A549 (cell line): ENCODE measurements at regions of chr17 and their contacts with region 1.

Region 1: DNA sequence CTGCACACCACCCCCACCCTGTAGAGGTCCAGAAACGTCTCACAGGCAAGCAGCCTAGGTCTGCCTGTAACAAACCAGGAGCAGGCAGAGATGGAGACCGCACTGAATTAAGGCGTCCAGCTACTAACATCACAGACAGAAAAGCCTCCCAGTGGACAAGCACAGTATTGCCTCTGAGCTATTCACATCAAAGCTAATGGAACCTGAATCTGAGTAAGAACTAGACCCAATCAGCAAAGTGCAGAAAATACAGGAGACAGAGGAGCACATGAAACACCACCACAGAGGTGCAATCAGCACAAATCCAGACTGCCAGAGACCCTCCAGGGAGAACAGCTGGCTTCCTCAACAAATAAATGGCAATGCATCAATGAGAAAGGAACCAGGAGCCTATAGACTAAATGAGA is 22.2 kb upstream of the PEMT start:
- DNase-seq: peak; percentile 77 to 85
- ATAC-seq: peak; percentile 97 to 98
- H3K4me3 ChIP-seq: no peak overlapping the region
- H3K27ac ChIP-seq: no peak overlapping the region
- H3K4me1 ChIP-seq: no peaks in the 10 kb centered on the region
- CTCF ChIP-seq: peak; percentile 59
- EP300 ChIP-seq: no peak
- POLR2A ChIP-seq: no peak
- RAD21 ChIP-seq: peak; percentile 54 to 55; a peak in 3 of 5 replicates

Region 2: GRCh38 chr17:17403899-17404576 is 209.7 kb before region 1 on chr17:
- CTCF ChIA-PET with region 1: no interaction called
- POLR2A ChIA-PET with region 1: no interaction called
- DNase-seq: no peak
- ATAC-seq: no peak
- H3K4me3 ChIP-seq: no peak overlapping the region
- H3K27ac ChIP-seq: no peak overlapping the region
- H3K4me1 ChIP-seq: peaks cover 12% of the 10 kb centered on the region; the same call in 1 of the 3 replicates
- CTCF ChIP-seq: no peak
- EP300 ChIP-seq: no peak
- POLR2A ChIP-seq: no peak
- RAD21 ChIP-seq: no peak

Region 3: GRCh38 chr17:17591355-17592298 is 22.1 kb before region 1 on chr17 and contains the start of gene PEMT:
- CTCF ChIA-PET with region 1: interaction called, 40 read pairs
- POLR2A ChIA-PET with region 1: interaction called, 8 read pairs
- DNase-seq: peak; percentile 96 to 100
- ATAC-seq: peak; percentile 94 to 98
- H3K4me3 ChIP-seq: peak within 1 kb of the TSS; percentile 86
- H3K27ac ChIP-seq: peak within 1 kb of the TSS; percentile 89 to 94
- H3K4me1 ChIP-seq: peaks cover 16% of the 10 kb centered on the region
- CTCF ChIP-seq: no peak
- EP300 ChIP-seq: no peak
- POLR2A ChIP-seq: peak; percentile 78
- RAD21 ChIP-seq: no peak
- polyA plus RNA-seq, gene PEMT: 47.8 and 62.4 TPM in 2 replicates